ENCODE measurements at regions of chr1 and their contacts with region 1.

Region 1: GRCh38 chr1:204162231-204163074 is 3.7 kb downstream of the REN start:
- DNase-seq: peak; percentile 60 to 81 (median 71)
- ATAC-seq: peak; percentile 90
- H3K4me3 ChIP-seq: no peak overlapping the region
- H3K4me3 Mint-ChIP-seq: no peak overlapping the region
- H3K27ac ChIP-seq: no peak overlapping the region
- H3K27ac Mint-ChIP-seq: no peak overlapping the region
- H3K4me1 ChIP-seq: no peaks in the 10 kb centered on the region
- H3K4me1 Mint-ChIP-seq: no peaks in the 10 kb centered on the region
- H3K27me3 ChIP-seq: no peaks in the 10 kb centered on the region
- H3K27me3 Mint-ChIP-seq: peaks cover 5 to 18% (median 9%) of the 10 kb centered on the region in 5 donors

Region 2: DNA sequence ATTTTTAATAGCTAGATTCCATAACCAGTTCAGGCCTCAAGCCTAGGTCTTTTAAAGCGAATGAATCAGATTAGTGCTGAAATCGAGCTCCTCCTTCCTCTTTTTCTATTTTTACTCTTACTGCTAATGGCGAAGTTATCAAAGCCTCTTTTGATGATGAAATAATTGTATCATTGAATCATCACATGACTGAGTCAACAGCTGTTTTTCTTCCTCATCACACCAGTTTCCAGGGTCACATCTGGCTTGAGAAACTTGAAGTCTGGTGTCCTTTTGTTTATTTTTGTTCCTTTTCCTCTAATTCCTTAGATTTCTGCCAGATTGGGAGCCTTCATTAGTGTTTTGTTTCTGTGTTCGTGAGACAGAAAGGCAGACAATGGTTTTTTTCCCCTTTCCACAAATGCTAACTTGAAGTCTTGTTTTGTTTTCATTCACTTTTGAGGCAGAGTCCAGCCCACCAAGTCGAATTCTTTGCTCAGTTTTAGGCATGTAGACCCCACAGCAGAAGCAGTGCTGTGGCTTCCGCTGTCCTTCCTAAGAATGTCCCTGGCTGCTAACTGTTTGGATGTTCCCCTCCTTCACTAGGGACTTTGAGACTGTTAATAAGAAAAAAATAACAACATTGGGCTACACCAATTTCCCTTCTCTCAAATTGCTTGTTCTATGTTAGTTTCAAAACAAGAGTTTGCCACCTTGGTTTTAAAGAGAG is 759.7 kb before region 1 on chr1:
- CTCF ChIA-PET with region 1: no interaction called
- POLR2A ChIA-PET with region 1: no interaction called
- intact Hi-C with region 1: no loop called
- DNase-seq: no peak
- ATAC-seq: peak; percentile 55
- H3K4me3 ChIP-seq: no peak overlapping the region
- H3K4me3 Mint-ChIP-seq: no peak overlapping the region
- H3K27ac ChIP-seq: no peak overlapping the region
- H3K27ac Mint-ChIP-seq: no peak overlapping the region
- H3K4me1 ChIP-seq: no peaks in the 10 kb centered on the region
- H3K4me1 Mint-ChIP-seq: peaks cover 0 to 2% (median 0%) of the 10 kb centered on the region in 7 donors
- H3K27me3 ChIP-seq: no peaks in the 10 kb centered on the region
- H3K27me3 Mint-ChIP-seq: peaks cover 26 to 44% (median 31%) of the 10 kb centered on the region in 5 donors

Region 3: GRCh38 chr1:204207136-204207616 is 44.7 kb after region 1 on chr1:
- CTCF ChIA-PET with region 1: interaction called, 5 read pairs
- POLR2A ChIA-PET with region 1: no interaction called
- intact Hi-C with region 1: loop called (anchors 1 kb)
- DNase-seq: peak; percentile 38 to 81 (median 64)
- ATAC-seq: peak; percentile 93
- H3K4me3 ChIP-seq: no peak overlapping the region
- H3K4me3 Mint-ChIP-seq: peak overlapping the region in 1 of 10 donors; percentile 45
- H3K27ac ChIP-seq: no peak overlapping the region
- H3K27ac Mint-ChIP-seq: no peak overlapping the region
- H3K4me1 ChIP-seq: peaks cover 0 to 4% of the 10 kb centered on the region in 2 donors
- H3K4me1 Mint-ChIP-seq: peaks cover 3 to 19% (median 15%) of the 10 kb centered on the region in 7 donors
- H3K27me3 ChIP-seq: no peaks in the 10 kb centered on the region
- H3K27me3 Mint-ChIP-seq: peaks cover 25 to 40% (median 33%) of the 10 kb centered on the region in 5 donors

Region 4: GRCh38 chr1:204398217-204399081 is 236.0 kb after region 1 on chr1:
- CTCF ChIA-PET with region 1: interaction called, 46 read pairs
- POLR2A ChIA-PET with region 1: no interaction called
- intact Hi-C with region 1: loop called (anchors 1 kb)
- DNase-seq: peak in 8 of 9 donors; percentile 44 to 74 (median 66)
- ATAC-seq: peak; percentile 92
- H3K4me3 ChIP-seq: no peak overlapping the region
- H3K4me3 Mint-ChIP-seq: no peak overlapping the region
- H3K27ac ChIP-seq: peak overlapping the region; percentile 54
- H3K27ac Mint-ChIP-seq: peak overlapping the region; percentile 55 to 91 (median 80)
- H3K4me1 ChIP-seq: no peaks in the 10 kb centered on the region
- H3K4me1 Mint-ChIP-seq: peaks cover 4 to 21% (median 8%) of the 10 kb centered on the region in 7 donors
- H3K27me3 ChIP-seq: no peaks in the 10 kb centered on the region
- H3K27me3 Mint-ChIP-seq: no peaks in the 10 kb centered on the region

Region 5: GRCh38 chr1:204494281-204495077 is 332.0 kb after region 1 on chr1 and contains the start of gene PIK3C2B:
- CTCF ChIA-PET with region 1: no interaction called
- POLR2A ChIA-PET with region 1: no interaction called
- intact Hi-C with region 1: loop called in 1 of 2 experiments (anchors 2 kb)
- DNase-seq: peak; percentile 54 to 80 (median 72)
- ATAC-seq: peak; percentile 83
- H3K4me3 ChIP-seq: peak within 1 kb of the TSS; percentile 84
- H3K4me3 Mint-ChIP-seq: peak within 1 kb of the TSS; percentile 92 to 98 (median 95)
- H3K27ac ChIP-seq: peak within 1 kb of the TSS; percentile 87
- H3K27ac Mint-ChIP-seq: peak within 1 kb of the TSS; percentile 83 to 98 (median 93)
- H3K4me1 ChIP-seq: peaks cover 23 to 35% of the 10 kb centered on the region in 2 donors
- H3K4me1 Mint-ChIP-seq: peaks cover 37 to 89% (median 73%) of the 10 kb centered on the region in 7 donors
- H3K27me3 ChIP-seq: no peaks in the 10 kb centered on the region
- H3K27me3 Mint-ChIP-seq: peaks cover 0 to 2% (median 0%) of the 10 kb centered on the region in 5 donors
- total RNA-seq, gene PIK3C2B: 26.8 to 41.9 (median 32.5) TPM

Region 6: GRCh38 chr1:204763706-204764427 is 601.4 kb after region 1 on chr1:
- CTCF ChIA-PET with region 1: no interaction called
- POLR2A ChIA-PET with region 1: no interaction called
- intact Hi-C with region 1: loop called in 1 of 2 experiments (anchors 1 kb)
- DNase-seq: peak; percentile 44 to 80 (median 66)
- ATAC-seq: peak; percentile 96
- H3K4me3 ChIP-seq: peak overlapping the region; percentile 27
- H3K4me3 Mint-ChIP-seq: peak overlapping the region; percentile 46 to 74 (median 60)
- H3K27ac ChIP-seq: no peak overlapping the region
- H3K27ac Mint-ChIP-seq: no peak overlapping the region
- H3K4me1 ChIP-seq: peaks cover 4 to 9% of the 10 kb centered on the region in 2 donors
- H3K4me1 Mint-ChIP-seq: peaks cover 6 to 16% (median 7%) of the 10 kb centered on the region in 7 donors
- H3K27me3 ChIP-seq: no peaks in the 10 kb centered on the region
- H3K27me3 Mint-ChIP-seq: peaks cover 3 to 41% (median 11%) of the 10 kb centered on the region in 5 donors